CD4-positive, alpha-beta T cell (primary cell): ENCODE measurements at regions of chr1 and their contacts with region 1.

Region 1: DNA sequence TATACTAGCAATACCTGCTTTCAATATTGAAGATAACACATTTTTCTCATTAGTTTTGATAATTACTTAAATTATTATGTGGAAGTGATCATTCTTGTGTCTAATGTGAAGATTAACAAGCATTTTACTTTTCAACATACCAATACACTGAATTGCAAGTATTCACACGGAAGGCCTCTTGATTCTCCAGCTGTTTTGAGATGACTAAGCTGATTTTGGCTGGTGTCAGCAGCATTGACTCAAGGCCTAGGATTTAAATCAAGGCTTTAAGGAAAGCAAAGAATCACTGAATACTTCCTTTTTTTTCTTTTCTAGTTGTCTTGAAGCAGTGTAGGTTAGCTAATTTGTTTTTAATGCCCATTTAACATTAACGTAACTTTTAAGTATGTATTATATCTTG is 373.7 kb downstream of the SRGAP2C start:
- DNase-seq: no peak
- ATAC-seq: no peak
- H3K4me3 ChIP-seq: no peak overlapping the region
- H3K4me3 Mint-ChIP-seq: peak overlapping the region; percentile 50
- H3K27ac ChIP-seq: no peak overlapping the region
- H3K27ac Mint-ChIP-seq: peak overlapping the region; percentile 69
- H3K4me1 ChIP-seq: peaks cover 6% of the 10 kb centered on the region
- H3K4me1 Mint-ChIP-seq: peaks cover 44% of the 10 kb centered on the region
- H3K27me3 ChIP-seq: no peaks in the 10 kb centered on the region
- H3K27me3 Mint-ChIP-seq: no peaks in the 10 kb centered on the region
- CTCF ChIP-seq: no peak

Region 2: GRCh38 chr1:121408354-121408753 is 150.2 kb before region 1 on chr1:
- CTCF ChIA-PET with region 1: no interaction called
- POLR2A ChIA-PET with region 1: no interaction called
- intact Hi-C with region 1: no loop called
- DNase-seq: peak in 1 of 14 experiments; percentile 11
- ATAC-seq: no peak
- H3K4me3 ChIP-seq: no peak overlapping the region
- H3K4me3 Mint-ChIP-seq: no peak overlapping the region
- H3K27ac ChIP-seq: no peak overlapping the region
- H3K27ac Mint-ChIP-seq: no peak overlapping the region
- H3K4me1 ChIP-seq: no peaks in the 10 kb centered on the region
- H3K4me1 Mint-ChIP-seq: no peaks in the 10 kb centered on the region
- H3K27me3 ChIP-seq: no peaks in the 10 kb centered on the region
- H3K27me3 Mint-ChIP-seq: no peaks in the 10 kb centered on the region
- CTCF ChIP-seq: no peak

Region 3: GRCh38 chr1:121458291-121459048 is 100.0 kb before region 1 on chr1:
- CTCF ChIA-PET with region 1: no interaction called
- POLR2A ChIA-PET with region 1: no interaction called
- intact Hi-C with region 1: no loop called
- DNase-seq: peak in 3 of 14 experiments; percentile 66 to 76 (median 70)
- ATAC-seq: peak; percentile 55
- H3K4me3 ChIP-seq: peak overlapping the region; percentile 36
- H3K4me3 Mint-ChIP-seq: peak overlapping the region; percentile 84
- H3K27ac ChIP-seq: peak overlapping the region in 1 of 2 donors; percentile 43
- H3K27ac Mint-ChIP-seq: peak overlapping the region; percentile 76
- H3K4me1 ChIP-seq: no peaks in the 10 kb centered on the region
- H3K4me1 Mint-ChIP-seq: peaks cover 14% of the 10 kb centered on the region
- H3K27me3 ChIP-seq: no peaks in the 10 kb centered on the region
- H3K27me3 Mint-ChIP-seq: no peaks in the 10 kb centered on the region
- CTCF ChIP-seq: no peak

Region 4: DNA sequence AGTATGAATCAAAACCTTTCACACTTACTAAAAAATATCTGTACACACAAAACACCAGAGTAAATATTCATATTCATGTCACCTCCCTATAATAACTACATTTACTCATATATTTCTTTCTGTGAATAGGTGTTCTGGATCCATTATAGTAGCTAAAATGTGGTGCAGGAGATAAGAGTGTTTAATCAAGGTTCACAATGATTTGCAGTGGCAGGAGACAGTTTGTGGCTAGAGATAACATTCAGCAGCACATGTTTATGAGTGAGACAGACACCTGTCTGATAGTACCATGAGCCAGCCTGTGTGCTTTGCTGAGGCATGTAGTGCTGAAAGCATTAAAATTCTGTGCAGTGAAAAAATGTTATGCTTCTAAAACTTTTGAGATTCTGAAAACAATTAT is 36.6 kb after region 1 on chr1:
- CTCF ChIA-PET with region 1: no interaction called
- POLR2A ChIA-PET with region 1: no interaction called
- intact Hi-C with region 1: loop called (anchors 5 kb)
- DNase-seq: no peak
- ATAC-seq: no peak
- H3K4me3 ChIP-seq: no peak overlapping the region
- H3K4me3 Mint-ChIP-seq: no peak overlapping the region
- H3K27ac ChIP-seq: no peak overlapping the region
- H3K27ac Mint-ChIP-seq: no peak overlapping the region
- H3K4me1 ChIP-seq: no peaks in the 10 kb centered on the region
- H3K4me1 Mint-ChIP-seq: peaks cover 20% of the 10 kb centered on the region
- H3K27me3 ChIP-seq: no peaks in the 10 kb centered on the region
- H3K27me3 Mint-ChIP-seq: no peaks in the 10 kb centered on the region
- CTCF ChIP-seq: no peak